H1 (cell line): ENCODE measurements at regions of chr2 and their contacts with region 1.

Region 1: DNA sequence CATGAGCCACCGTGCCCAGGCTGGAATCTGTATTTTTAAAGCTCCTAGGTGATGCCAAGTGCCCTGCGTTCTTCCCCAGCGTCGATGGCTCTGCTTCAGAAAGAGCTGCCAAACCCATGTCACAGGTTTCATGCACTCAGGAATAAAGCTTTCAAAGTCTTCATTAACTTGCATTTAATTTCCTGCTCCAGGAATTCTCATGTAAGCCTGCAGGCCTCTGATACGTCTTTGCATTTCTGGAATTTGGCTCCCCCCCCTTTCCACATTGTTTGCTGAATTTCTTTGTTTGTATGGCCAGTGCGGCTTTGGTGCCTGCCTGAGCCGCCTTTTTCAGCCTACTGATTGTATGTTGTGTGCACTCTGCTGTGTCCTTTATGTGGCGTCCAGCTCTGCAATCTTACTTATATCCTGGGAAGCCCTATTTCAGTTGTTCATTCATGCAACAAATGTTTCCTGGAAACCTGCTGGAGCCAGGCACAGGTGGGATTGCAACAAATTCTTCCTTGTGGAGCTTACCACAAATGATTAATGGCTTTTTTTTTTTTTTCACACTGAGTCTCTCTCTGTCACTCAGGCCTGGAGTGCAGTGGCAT is 17.9 kb upstream of the OTOF start:
- DNase-seq: no peak
- H3K4me3 ChIP-seq: no peak overlapping the region
- H3K27ac ChIP-seq: no peak overlapping the region
- H3K4me1 ChIP-seq: peaks cover 2 to 5% (median 3%) of the 10 kb centered on the region in 4 experiments; a peak in 4 of 7 replicates
- H3K27me3 ChIP-seq: no peaks in the 10 kb centered on the region
- CTCF ChIP-seq: no peak
- EP300 ChIP-seq: no peak
- POLR2A ChIP-seq: no peak
- RAD21 ChIP-seq: no peak

Region 2: DNA sequence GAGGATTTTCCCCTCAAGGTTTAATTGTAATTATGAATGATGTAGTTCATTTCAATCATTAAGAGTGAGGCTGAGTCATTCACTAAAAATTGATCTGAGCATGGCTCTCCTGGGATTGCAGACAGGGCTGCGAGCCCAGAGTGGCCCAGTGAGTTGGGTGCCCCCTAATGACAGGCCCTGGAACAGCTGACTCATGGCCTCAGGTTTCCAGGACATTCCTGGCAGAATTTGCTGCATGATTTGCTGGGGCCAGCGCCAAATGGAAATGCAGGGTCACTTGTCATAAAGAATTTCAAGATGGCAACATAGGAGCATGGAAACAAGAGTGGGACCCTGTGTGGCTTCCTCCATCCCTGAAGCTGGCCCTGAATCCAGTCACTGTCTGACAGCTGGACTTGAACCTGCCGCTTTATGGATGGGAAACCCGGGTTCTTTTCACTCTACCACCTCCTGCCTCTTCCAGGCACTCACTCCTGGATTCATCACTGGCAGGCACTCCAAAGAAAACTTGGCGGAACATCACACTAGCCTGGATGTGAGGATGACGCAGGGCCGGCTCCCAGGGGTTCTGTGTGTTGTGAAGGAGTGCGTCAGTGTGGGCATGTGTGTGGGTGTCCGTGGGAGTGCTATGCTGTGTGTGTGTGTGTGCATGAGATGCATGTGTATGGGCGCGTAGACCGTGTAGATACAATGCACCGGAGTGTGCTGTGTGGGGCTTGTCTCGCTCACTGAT is 33.1 kb before region 1 on chr2:
- CTCF ChIA-PET with region 1: interaction called, 68 read pairs
- POLR2A ChIA-PET with region 1: no interaction called
- DNase-seq: peak; percentile 27 to 77
- H3K4me3 ChIP-seq: no peak overlapping the region
- H3K27ac ChIP-seq: no peak overlapping the region
- H3K4me1 ChIP-seq: peaks cover 0 to 23% (median 3%) of the 10 kb centered on the region in 4 experiments; a peak in 6 of 7 replicates
- H3K27me3 ChIP-seq: no peaks in the 10 kb centered on the region
- CTCF ChIP-seq: peak in 2 of 3 experiments; percentile 65 to 85; a peak in 3 of 4 replicates
- EP300 ChIP-seq: no peak
- POLR2A ChIP-seq: no peak
- RAD21 ChIP-seq: peak; percentile 68 to 72